Adrenal gland (tissue), 19 donors: ENCODE measurements at regions of chr7 and their contacts with region 1.

Region 1: GRCh38 chr7:64174328-64174727 is 32.7 kb upstream of the ZNF735 start:
- DNase-seq: no peak
- H3K4me3 ChIP-seq: no peak overlapping the region
- H3K27ac ChIP-seq: no peak overlapping the region
- H3K4me1 ChIP-seq: no peaks in the 10 kb centered on the region
- H3K27me3 ChIP-seq: no peaks in the 10 kb centered on the region
- CTCF ChIP-seq: no peak
- POLR2A ChIP-seq: no peak

Region 2: DNA sequence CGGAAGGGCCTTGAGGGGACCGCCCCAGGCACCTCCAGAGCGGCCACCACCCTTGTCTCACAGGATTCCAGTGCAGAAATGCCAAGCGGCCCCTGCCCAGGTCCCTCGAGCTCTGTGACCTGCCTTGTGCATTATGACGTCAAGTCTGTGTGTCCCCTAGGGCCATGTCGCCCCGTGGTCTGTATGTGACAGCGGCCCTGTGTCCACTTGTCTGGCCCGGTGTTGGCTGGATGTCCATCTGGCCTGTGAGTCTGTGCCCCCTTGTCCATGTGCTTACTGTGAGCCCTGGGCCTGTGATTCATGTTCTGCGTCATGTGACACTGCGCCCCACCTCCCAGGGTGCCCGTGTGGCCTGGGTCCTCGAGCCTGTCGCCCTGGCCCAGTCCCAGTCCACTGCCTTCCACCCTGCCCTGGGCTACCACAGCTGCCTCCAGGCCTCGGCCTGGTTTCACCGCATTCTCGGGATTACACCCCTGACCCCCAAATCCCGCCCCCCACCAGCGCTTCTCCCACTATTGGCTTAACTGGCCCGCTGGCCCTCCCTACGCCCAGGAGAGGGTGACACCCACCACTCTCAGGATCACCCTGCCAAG is 242.2 kb before region 1 on chr7:
- intact Hi-C with region 1: no loop called
- DNase-seq: no peak
- H3K4me3 ChIP-seq: no peak overlapping the region
- H3K27ac ChIP-seq: no peak overlapping the region
- H3K4me1 ChIP-seq: peaks cover 0 to under 1% of the 10 kb centered on the region in 2 donors
- H3K27me3 ChIP-seq: no peaks in the 10 kb centered on the region
- CTCF ChIP-seq: no peak
- POLR2A ChIP-seq: no peak

Region 3: DNA sequence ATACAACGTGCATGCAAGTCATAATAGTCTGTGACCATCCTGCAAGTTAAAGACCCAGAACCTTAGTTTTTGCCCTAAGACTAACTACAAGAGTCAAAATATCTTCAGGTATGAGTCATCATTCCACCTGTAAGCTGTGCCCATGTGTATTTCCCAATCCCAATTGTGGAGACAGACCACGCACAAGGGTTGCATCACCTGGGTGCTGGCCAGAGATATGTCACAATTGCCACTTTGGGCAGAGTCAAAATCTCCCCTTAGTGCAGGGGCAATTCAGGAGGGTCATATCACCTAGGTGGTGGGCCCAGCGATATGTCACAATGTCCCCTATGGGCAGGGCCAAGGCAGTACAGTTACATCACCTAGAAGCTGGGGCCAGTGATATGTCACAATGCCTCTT is 66.8 kb after region 1 on chr7:
- intact Hi-C with region 1: loop called in 1 of 2 experiments (anchors 10 kb)
- DNase-seq: no peak
- H3K4me3 ChIP-seq: no peak overlapping the region
- H3K27ac ChIP-seq: no peak overlapping the region
- H3K4me1 ChIP-seq: no peaks in the 10 kb centered on the region
- H3K27me3 ChIP-seq: no peaks in the 10 kb centered on the region
- CTCF ChIP-seq: no peak
- POLR2A ChIP-seq: no peak